Heart right ventricle (tissue), 16 donors: ENCODE measurements at regions of chr10 and their contacts with region 1.

Region 1: DNA sequence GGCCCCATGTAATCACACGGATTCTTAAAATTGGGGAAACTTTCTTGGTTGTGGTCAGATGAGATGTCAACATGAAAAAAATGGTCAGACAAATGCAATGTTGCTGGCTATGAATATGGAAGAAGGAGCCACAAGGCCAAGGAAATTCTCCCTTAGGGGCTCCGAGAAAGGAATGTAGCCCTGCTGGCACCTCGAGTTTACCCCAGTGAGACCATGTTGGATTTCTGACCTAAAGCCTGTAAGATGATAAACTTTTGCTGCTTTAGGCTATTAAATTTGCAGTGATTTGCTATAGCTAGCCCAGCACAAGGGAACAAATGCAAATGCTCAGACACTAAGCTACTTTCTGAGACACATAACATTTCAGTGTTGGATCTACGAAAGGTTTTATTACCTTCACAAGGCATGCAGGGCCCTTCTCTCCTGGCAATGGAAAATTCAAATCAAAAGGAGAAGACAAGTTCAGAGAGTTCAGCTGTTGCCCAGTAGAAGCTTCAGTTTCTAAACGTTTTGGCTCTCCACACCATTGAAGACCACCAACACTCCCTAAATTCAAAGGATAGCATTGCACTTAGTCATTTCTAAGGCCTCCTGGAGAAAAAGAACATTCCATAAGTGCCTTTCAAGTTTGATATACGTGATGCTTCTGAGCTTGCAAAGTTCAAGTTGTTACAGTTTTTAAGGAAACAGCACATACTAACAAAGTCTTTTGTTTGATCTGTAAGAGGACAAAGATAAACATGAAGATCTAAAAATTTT is 23.4 kb downstream of the MCMBP start:
- DNase-seq: no peak
- ATAC-seq: no peak
- H3K4me3 ChIP-seq: no peak overlapping the region
- H3K27ac ChIP-seq: peak overlapping the region in 1 of 10 donors; percentile 12
- H3K4me1 ChIP-seq: peaks cover 0 to 16% (median 0%) of the 10 kb centered on the region in 9 donors
- H3K27me3 ChIP-seq: no peaks in the 10 kb centered on the region
- CTCF ChIP-seq: no peak

Region 2: DNA sequence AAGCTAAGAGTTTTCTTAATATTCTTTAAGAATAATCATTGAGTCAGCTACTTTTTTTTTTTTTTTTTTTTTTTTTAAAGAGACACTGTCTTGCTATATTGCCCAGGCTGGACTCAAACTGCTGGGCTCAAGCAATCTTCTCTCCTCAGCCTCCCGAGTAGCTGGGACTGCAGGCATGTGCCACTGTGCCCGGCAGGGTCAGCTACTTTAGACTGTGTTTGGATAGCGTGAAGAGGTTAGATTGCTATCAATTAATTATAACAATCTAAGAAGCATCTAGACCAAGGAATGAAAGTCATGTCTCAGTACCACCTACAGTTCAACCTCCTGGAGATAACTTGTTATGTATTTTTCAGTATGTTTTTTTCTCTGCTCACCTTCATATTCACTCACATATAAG is 50.5 kb before region 1 on chr10:
- intact Hi-C with region 1: loop called in 1 of 10 experiments (anchors 10 kb)
- DNase-seq: no peak
- ATAC-seq: no peak
- H3K4me3 ChIP-seq: no peak overlapping the region
- H3K27ac ChIP-seq: no peak overlapping the region
- H3K4me1 ChIP-seq: peaks cover 0 to 2% (median 0%) of the 10 kb centered on the region in 9 donors
- H3K27me3 ChIP-seq: no peaks in the 10 kb centered on the region
- CTCF ChIP-seq: no peak

Region 3: GRCh38 chr10:119892188-119893065 is 43.2 kb after region 1 on chr10 and contains the start of gene SEC23IP:
- intact Hi-C with region 1: no loop called
- DNase-seq: peak; percentile 96 to 97
- ATAC-seq: peak; percentile 99 to 100 (median 99)
- H3K4me3 ChIP-seq: peak within 1 kb of the TSS; percentile 69 to 98 (median 86)
- H3K27ac ChIP-seq: peak within 1 kb of the TSS; percentile 41 to 93 (median 87)
- H3K4me1 ChIP-seq: peaks cover 4 to 59% (median 42%) of the 10 kb centered on the region in 9 donors
- H3K27me3 ChIP-seq: no peaks in the 10 kb centered on the region
- CTCF ChIP-seq: peak in 2 of 9 donors; percentile 2 to 15
- total RNA-seq, gene SEC23IP: 24.0 to 43.9 (median 31.2) TPM

Region 4: DNA sequence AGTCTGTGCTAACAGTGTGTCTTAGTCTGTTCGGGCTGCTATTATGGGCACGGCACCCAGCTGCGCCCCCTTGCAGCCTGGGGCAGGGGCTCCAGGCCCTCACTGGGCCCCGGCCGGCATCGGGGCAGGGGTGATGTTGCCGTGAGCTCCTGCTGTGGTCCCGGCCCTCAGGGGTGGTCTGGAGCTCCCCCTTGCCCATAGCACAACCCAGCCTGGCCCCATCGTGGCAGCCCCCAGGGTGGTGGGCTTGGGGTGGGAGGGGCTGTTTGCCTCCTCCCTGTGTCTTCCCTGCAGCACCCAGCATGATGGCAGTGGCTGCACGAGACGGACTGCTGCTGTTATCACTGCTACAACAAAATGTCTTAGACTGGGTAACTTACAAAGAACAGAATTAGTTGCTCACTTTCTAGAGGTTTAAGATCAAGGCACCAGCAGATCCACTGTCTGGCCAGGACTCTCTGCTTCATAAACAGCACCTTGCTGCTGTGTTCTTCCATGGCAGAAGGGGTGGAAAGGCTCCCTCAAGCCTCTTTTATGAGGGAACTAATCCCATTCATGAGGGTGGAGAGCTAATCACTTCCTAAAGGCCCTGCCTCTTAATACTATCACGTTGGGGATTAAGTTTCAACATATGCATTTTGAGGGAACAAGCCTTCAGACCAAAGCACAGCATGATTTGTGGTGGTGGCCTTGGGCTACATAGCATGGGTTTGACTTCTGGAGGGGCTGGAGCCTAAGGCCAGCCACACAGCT is 192.8 kb after region 1 on chr10:
- intact Hi-C with region 1: no loop called
- DNase-seq: no peak
- ATAC-seq: no peak
- H3K4me3 ChIP-seq: no peak overlapping the region
- H3K27ac ChIP-seq: no peak overlapping the region
- H3K4me1 ChIP-seq: no peaks in the 10 kb centered on the region
- H3K27me3 ChIP-seq: no peaks in the 10 kb centered on the region
- CTCF ChIP-seq: no peak

Region 5: GRCh38 chr10:120052964-120053702 is 203.9 kb after region 1 on chr10:
- intact Hi-C with region 1: no loop called
- DNase-seq: no peak
- ATAC-seq: no peak
- H3K4me3 ChIP-seq: no peak overlapping the region
- H3K27ac ChIP-seq: no peak overlapping the region
- H3K4me1 ChIP-seq: no peaks in the 10 kb centered on the region
- H3K27me3 ChIP-seq: peaks cover 0 to 14% (median 0%) of the 10 kb centered on the region in 7 donors
- CTCF ChIP-seq: no peak